B cell (primary cell): ENCODE measurements at regions of chr11 and their contacts with region 1.

Region 1: DNA sequence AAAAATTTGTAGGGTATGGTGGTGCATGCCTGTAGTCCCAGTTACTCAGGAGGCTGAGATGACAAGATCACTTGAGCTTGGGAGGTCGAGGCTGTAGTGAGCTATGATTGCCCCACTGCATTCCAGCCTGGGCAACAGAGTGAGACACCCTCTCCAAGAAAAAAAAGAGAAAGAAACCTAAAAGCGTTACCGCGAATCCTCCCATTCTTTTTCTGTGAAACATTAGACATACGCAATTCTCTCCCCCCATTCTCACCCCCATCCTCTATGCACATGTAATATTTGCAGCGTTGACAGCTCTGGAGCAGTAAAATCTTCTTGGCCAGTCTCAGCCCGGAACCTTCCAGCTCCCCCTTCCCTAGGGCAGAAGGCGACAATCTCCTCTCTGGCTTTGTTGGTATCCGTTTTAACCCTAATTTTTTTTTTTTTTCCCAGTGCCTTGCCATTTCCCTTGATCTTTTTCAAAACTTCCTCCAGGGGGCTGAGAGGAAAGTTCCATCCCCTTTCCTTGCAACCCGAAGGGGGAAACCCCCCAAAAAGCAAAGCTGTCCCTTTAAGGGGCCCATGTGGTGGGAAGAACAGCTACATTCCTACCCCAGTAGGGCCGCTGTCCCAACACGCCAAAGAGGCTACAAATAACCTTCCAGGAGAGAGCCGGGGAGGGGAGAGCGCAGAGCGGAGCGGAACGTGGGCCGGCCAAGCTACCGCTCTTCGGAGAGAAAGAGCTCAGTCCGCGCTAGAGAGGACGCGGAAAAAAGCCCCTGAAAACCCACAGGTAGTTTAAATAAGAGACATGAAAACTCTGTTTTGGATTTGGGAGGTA is 1.9 kb downstream of the LRP4 start:
- DNase-seq: peak; percentile 24
- ATAC-seq: no peak
- H3K4me3 ChIP-seq: peak overlapping the region in 4 of 5 experiments; percentile 14 to 54 (median 50)
- H3K4me3 Mint-ChIP-seq: peak overlapping the region; percentile 86
- H3K27ac ChIP-seq: no peak overlapping the region
- H3K27ac Mint-ChIP-seq: no peak overlapping the region
- H3K4me1 ChIP-seq: peaks cover 28 to 31% of the 10 kb centered on the region in 2 donors
- H3K4me1 Mint-ChIP-seq: peaks cover 30% of the 10 kb centered on the region
- H3K27me3 ChIP-seq: peaks cover 0 to 64% (median 36%) of the 10 kb centered on the region in 4 experiments
- H3K27me3 Mint-ChIP-seq: peaks cover 54% of the 10 kb centered on the region
- CTCF ChIP-seq: no peak

Region 2: DNA sequence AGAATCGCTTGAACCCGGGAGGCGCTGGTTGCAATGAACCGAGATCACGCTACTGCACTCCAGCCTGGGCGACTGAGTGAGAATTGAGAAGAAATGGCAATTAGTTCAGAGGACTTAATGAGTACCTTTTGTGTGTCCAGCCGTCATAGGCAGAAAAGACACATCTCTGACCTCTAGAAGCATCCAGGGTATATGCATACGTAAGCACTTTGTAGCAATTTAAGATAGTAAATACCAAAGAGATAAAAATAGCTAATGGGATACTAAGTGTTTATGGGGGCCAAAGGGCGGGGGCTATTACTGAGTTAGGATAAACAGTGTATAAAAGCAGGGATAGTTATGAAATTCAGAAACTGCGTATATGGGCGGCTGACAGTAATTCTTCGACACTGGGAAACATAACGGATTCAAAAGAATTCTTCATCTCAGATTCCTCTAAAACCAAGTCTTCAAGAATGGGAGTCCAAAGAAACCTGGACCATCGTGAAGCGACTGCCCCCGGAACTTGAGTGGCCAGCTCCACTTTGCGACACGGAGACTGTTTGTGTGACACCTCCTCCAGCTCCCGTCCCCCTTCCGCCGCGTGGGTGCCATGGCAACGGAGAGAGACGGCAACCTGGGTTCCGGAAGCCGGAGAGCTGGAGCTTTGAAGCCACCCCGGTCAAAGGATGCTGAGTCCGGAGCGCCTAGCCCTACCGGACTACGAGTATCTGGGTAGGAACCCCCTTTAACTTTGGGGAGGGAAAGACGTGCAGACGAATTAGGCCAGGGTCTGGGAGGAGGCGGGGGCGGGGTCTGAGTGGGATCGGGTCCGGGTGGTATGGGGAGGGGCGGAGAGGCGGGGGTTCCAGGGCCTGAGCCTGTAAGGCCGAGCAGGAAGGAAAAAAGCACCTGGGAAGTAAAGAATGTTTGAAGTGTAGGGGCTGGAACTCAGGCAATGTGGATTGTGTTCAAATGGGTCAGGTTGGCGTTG is 19.9 kb after region 1 on chr11 and contains the start of gene CSTPP1:
- CTCF ChIA-PET with region 1: interaction called, 4 read pairs
- POLR2A ChIA-PET with region 1: no interaction called
- intact Hi-C with region 1: loop called (anchors 1 kb)
- DNase-seq: peak; percentile 93
- ATAC-seq: peak; percentile 90
- H3K4me3 ChIP-seq: peak within 1 kb of the TSS; percentile 38 to 67 (median 64)
- H3K4me3 Mint-ChIP-seq: peak within 1 kb of the TSS; percentile 90
- H3K27ac ChIP-seq: peak within 1 kb of the TSS; percentile 30 to 69
- H3K27ac Mint-ChIP-seq: peak within 1 kb of the TSS; percentile 85
- H3K4me1 ChIP-seq: peaks cover 5 to 12% of the 10 kb centered on the region in 2 donors
- H3K4me1 Mint-ChIP-seq: peaks cover 18% of the 10 kb centered on the region
- H3K27me3 ChIP-seq: peaks cover 0 to 5% (median 0%) of the 10 kb centered on the region in 4 experiments
- H3K27me3 Mint-ChIP-seq: peaks cover 13% of the 10 kb centered on the region
- CTCF ChIP-seq: no peak
- total RNA-seq, gene CSTPP1: 27.4 and 29.0 TPM in 2 replicates

Region 3: DNA sequence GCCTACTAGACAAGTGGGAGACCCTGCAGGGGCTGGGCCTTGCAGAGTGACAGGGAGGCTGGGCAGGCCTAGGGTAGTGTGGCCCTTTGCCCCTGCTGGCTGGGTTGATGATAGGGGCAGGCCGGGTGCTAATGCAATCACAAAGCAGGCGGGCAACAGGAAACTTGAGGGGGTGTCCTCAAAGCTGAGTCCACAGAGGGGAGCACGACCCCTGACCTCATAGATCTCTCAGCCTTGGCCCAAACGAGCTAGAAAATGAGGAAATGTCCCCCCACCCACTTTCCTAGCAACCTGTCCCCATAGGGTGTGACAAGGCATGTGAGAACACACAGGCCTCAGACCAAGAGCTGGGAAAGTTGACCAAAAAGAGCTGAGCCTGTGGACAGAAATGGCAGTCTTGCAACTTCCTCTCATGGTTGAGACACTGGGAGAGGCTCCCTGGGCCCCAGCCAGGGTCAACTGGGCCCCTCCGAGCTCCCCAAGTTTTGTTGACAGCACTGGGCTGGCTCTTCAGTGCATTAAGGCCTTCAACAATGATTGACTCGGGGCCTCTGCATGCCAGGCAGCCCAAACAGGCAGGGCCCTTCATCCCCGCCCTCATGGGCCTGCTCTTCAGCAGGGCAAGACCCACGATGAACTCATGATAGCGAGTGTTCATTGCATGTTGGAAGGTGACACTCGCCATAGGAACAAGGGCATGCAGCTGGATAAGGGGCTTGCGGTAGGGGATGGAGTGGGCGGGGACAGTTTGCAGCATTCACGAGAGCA is 471.6 kb after region 1 on chr11:
- CTCF ChIA-PET with region 1: no interaction called
- POLR2A ChIA-PET with region 1: no interaction called
- intact Hi-C with region 1: no loop called
- DNase-seq: no peak
- ATAC-seq: no peak
- H3K4me3 ChIP-seq: no peak overlapping the region
- H3K4me3 Mint-ChIP-seq: no peak overlapping the region
- H3K27ac ChIP-seq: no peak overlapping the region
- H3K27ac Mint-ChIP-seq: peak overlapping the region; percentile 61
- H3K4me1 ChIP-seq: peaks cover 12 to 33% of the 10 kb centered on the region in 2 donors
- H3K4me1 Mint-ChIP-seq: peaks cover 27% of the 10 kb centered on the region
- H3K27me3 ChIP-seq: no peaks in the 10 kb centered on the region
- H3K27me3 Mint-ChIP-seq: no peaks in the 10 kb centered on the region
- CTCF ChIP-seq: no peak